ENCODE measurements at regions of chr1 and their contacts with region 1.

Region 1: DNA sequence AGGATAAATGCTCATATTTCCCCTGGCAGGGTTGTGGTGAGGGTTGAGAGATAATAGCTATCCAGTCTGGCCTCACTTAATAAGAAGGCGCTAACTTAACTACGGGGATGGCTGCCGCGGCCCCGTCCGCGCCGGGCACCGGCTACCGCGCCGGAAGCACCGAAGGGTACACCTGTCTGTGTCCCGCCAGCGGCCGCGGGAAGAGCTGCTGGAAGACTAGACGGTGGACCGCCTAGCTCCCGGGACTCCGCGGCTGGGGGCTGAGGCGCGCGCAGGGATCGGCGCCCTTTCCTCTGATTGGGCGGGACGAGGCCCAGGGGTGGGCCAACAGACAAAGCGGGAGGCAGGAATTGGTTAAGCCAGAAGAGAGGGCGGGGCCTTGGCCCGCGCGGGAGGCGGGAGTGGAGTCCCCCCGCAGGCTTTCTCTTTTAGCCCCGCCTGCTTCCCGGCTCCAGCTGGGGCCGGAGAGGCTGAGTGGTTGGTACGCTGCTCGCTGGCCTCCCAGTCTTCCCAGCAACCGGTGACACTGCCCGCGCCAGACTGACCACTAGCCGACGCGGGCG is at the start of gene ZNF672:
- DNase-seq: peak; percentile 97
- H3K27ac ChIP-seq: peak within 1 kb of the TSS; percentile 96
- CTCF ChIP-seq: no peak

Region 2: GRCh38 chr1:248858891-248859889 is 21.3 kb after region 1 on chr1 and contains the start of gene ZNF692:
- CTCF ChIA-PET with region 1: interaction called, 6 read pairs
- POLR2A ChIA-PET with region 1: interaction called, 21 read pairs
- DNase-seq: peak; percentile 95
- H3K27ac ChIP-seq: peak within 1 kb of the TSS; percentile 90
- CTCF ChIP-seq: no peak